ENCODE measurements at regions of chr5 and their contacts with region 1.

Region 1: GRCh38 chr5:134041570-134042411 is 37.0 kb upstream of the VDAC1 start:
- DNase-seq: peak; percentile 32
- H3K4me3 Mint-ChIP-seq: no peak overlapping the region
- H3K27ac Mint-ChIP-seq: peak overlapping the region; percentile 81
- H3K4me1 Mint-ChIP-seq: peaks cover 56% of the 10 kb centered on the region
- H3K27me3 Mint-ChIP-seq: peaks cover 2% of the 10 kb centered on the region

Region 2: GRCh38 chr5:133952729-133953567 is 88.8 kb before region 1 on chr5:
- CTCF ChIA-PET with region 1: no interaction called
- POLR2A ChIA-PET with region 1: no interaction called
- DNase-seq: no peak
- H3K4me3 Mint-ChIP-seq: no peak overlapping the region
- H3K27ac Mint-ChIP-seq: no peak overlapping the region
- H3K4me1 Mint-ChIP-seq: peaks cover 7% of the 10 kb centered on the region
- H3K27me3 Mint-ChIP-seq: no peaks in the 10 kb centered on the region

Region 3: GRCh38 chr5:134004592-134005375 is 37.0 kb before region 1 on chr5 and contains the start of gene VDAC1:
- CTCF ChIA-PET with region 1: interaction called, 11 read pairs
- POLR2A ChIA-PET with region 1: no interaction called
- DNase-seq: peak; percentile 87
- H3K4me3 Mint-ChIP-seq: peak within 1 kb of the TSS; percentile 88
- H3K27ac Mint-ChIP-seq: peak within 1 kb of the TSS; percentile 93
- H3K4me1 Mint-ChIP-seq: peaks cover 44% of the 10 kb centered on the region
- H3K27me3 Mint-ChIP-seq: no peaks in the 10 kb centered on the region
- total RNA-seq, gene VDAC1: 184 to 208 TPM

Region 4: DNA sequence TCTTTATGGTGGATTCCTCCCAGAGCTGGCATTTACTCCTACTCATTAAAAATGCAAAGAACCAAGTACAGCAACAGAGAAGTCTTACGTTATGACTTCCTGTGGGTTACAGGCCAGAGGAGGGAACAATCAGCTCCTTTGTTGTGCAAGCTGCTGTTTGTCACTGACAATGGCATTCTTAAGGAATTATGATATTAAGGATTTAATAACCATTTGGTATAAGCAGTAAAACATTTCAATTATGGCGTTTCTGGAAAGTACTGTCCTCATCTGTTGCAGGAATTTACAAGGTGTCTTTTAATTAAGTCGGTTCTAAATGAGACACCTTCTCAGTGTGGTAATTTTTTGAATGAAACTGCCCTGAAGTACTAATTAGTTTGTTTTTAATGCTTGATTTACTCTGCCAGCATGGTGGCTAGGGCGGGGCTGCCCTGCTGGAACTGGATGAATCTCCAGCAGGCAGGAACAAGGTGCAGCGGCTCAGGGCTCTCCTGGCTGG is 12.1 kb after region 1 on chr5:
- CTCF ChIA-PET with region 1: interaction called, 45 read pairs
- POLR2A ChIA-PET with region 1: no interaction called
- DNase-seq: peak; percentile 30
- H3K4me3 Mint-ChIP-seq: no peak overlapping the region
- H3K27ac Mint-ChIP-seq: peak overlapping the region; percentile 83
- H3K4me1 Mint-ChIP-seq: peaks cover 34% of the 10 kb centered on the region
- H3K27me3 Mint-ChIP-seq: no peaks in the 10 kb centered on the region

Region 5: GRCh38 chr5:134083517-134083916 is 41.7 kb after region 1 on chr5:
- CTCF ChIA-PET with region 1: interaction called, 30 read pairs
- POLR2A ChIA-PET with region 1: no interaction called
- DNase-seq: no peak
- H3K4me3 Mint-ChIP-seq: no peak overlapping the region
- H3K27ac Mint-ChIP-seq: peak overlapping the region; percentile 7
- H3K4me1 Mint-ChIP-seq: peaks cover 74% of the 10 kb centered on the region
- H3K27me3 Mint-ChIP-seq: peaks cover 2% of the 10 kb centered on the region

Region 6: DNA sequence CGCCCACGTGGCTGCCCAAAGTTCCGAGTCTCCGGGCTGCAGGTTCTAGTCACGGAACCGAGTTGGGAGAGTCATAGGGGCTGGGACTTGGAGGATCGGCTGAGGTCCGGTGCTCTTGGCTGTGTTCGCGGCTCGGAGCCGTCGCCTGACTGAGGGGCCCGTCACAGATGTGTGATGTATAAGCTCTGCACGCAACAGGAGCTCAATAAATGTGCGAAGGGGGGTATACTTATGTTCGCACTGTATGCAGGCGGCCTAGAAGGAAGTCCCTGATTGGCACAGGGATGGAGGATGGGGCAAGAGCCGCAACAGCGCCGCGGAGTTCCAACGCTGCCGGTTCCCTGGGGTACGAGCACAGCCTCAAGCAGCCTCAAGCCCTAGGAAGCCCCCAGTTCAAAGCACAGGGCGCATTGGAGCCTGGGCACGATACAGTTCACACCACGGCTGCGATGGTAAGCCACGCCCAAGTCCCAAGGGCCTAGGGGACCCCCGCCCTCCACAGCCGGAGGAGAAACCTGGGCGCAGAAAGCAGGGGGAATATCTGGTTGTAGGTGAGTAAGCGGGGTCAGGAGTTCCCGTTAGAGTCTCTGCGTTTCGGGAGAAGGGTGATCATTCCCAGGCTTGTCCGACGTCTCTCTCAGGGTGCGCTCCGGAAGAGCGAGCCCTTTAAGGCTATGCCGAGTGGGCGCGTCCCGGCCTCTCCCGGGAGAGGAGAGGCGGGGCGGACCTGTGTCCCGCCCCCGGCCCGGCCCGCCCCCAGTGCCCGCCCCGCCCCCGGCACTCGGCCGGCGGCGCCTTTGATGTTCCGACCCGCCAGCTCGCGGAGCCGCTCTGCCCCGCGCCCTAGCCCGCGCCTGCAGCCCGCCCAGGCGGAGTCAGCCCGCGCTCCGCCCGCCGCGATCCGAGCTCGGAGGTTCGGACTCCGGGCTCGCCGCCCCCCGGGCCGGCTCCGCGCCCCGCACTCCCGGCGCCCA is 72.4 kb after region 1 on chr5 and contains the start of gene TCF7:
- CTCF ChIA-PET with region 1: interaction called, 27 read pairs
- POLR2A ChIA-PET with region 1: no interaction called
- DNase-seq: peak; percentile 77
- H3K4me3 Mint-ChIP-seq: peak within 1 kb of the TSS; percentile 82
- H3K27ac Mint-ChIP-seq: peak within 1 kb of the TSS; percentile 95
- H3K4me1 Mint-ChIP-seq: peaks cover 66% of the 10 kb centered on the region
- H3K27me3 Mint-ChIP-seq: peaks cover 8% of the 10 kb centered on the region
- total RNA-seq, gene TCF7: 271 to 283 TPM

Region 7: GRCh38 chr5:134145779-134146581 is 104.2 kb after region 1 on chr5:
- CTCF ChIA-PET with region 1: interaction called, 258 read pairs
- POLR2A ChIA-PET with region 1: interaction called, 3 read pairs
- DNase-seq: peak; percentile 85
- H3K4me3 Mint-ChIP-seq: no peak overlapping the region
- H3K27ac Mint-ChIP-seq: peak overlapping the region; percentile 14
- H3K4me1 Mint-ChIP-seq: peaks cover 53% of the 10 kb centered on the region
- H3K27me3 Mint-ChIP-seq: no peaks in the 10 kb centered on the region

Region 8: DNA sequence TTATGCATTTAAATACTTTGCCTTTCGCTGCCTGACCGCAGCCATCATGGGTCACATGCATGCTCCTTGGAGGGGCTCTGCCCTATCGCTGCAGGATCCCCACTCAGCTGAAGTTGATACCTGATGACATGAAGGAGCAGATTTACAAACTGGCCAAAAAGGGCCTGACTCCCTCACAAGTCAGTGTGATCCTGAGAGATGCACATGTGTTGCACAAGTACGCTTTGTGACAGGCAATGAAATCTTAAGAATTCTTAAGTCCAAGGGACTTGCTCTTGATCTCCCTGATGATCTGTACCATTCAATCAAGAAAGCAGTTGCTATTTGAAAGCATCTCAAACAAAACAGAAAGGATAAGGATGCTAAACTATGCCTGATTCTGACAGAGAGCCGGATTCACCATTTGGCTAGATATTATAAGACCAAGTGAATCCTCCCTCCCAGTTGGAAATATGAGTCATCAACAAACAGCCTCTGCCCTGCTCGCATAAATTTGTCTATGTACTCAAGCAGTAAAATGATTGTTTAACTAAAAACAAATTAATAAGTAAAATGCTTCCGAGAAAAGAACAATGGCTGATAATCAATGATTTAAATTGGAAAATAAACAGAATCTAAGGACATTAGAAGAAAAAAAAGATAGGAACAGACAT is 225.7 kb after region 1 on chr5:
- CTCF ChIA-PET with region 1: no interaction called
- POLR2A ChIA-PET with region 1: no interaction called
- DNase-seq: no peak
- H3K4me3 Mint-ChIP-seq: no peak overlapping the region
- H3K27ac Mint-ChIP-seq: no peak overlapping the region
- H3K4me1 Mint-ChIP-seq: no peaks in the 10 kb centered on the region
- H3K27me3 Mint-ChIP-seq: peaks cover 19% of the 10 kb centered on the region